ENCODE measurements at regions of chr5 and their contacts with region 1.

Region 1: GRCh38 chr5:173144200-173145176 is at the start of gene BNIP1:
- DNase-seq: peak; percentile 98
- H3K4me3 Mint-ChIP-seq: peak within 1 kb of the TSS; percentile 98
- H3K27ac Mint-ChIP-seq: peak within 1 kb of the TSS; percentile 97
- H3K4me1 Mint-ChIP-seq: no peaks in the 10 kb centered on the region
- H3K27me3 Mint-ChIP-seq: no peaks in the 10 kb centered on the region
- CTCF ChIP-seq: peak; percentile 98
- total RNA-seq, gene BNIP1: 22.1 and 35.1 TPM in 2 replicates

Region 2: DNA sequence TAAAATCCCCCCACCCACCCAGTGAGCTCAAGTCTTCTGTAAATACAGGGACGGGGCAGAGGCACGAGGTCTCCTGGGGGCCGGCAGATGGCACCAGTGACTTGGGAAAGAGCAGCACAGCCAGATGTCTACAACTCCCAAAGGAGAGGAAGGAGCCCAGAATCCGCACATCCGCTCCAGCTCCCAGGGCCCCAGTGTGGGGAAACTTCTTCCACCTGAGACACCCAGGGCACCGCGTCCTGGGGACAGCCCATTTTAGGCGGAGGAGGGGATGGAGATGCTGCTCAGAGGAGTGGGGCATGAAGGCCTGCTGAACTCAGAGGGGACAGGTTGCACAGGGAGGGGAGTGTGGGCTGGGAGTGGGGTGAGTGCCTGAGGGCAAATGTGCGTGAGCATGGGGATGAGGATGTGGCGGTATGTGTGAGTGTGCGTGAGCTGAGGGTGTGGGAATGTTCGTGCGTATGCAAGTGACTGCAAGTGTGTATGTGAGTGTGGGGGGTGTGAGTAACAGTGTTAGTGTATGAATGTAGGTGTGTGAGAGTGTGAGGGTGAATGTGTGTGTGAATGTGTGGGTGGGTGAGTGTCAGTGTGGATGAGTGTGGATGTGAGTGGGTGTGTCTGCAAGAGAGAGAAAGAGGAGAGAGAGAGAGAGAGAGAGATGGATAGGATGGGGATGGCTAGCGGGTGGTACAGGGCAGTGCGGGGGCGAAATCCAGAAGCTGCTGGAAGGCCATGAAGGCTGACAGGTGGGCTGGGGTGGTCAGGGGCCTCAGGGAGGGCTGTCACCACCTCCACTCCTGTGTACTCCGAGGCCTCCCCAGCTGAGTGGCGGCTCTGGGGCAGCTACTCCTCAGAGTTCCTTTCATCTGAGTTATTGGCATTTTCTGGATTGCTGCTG is 437.0 kb before region 1 on chr5:
- CTCF ChIA-PET with region 1: interaction called, 3 read pairs
- POLR2A ChIA-PET with region 1: no interaction called
- intact Hi-C with region 1: loop called (anchors 2 kb)
- DNase-seq: peak; percentile 89
- H3K4me3 Mint-ChIP-seq: no peak overlapping the region
- H3K27ac Mint-ChIP-seq: no peak overlapping the region
- H3K4me1 Mint-ChIP-seq: peaks cover 7% of the 10 kb centered on the region
- H3K27me3 Mint-ChIP-seq: no peaks in the 10 kb centered on the region
- CTCF ChIP-seq: peak; percentile 88

Region 3: DNA sequence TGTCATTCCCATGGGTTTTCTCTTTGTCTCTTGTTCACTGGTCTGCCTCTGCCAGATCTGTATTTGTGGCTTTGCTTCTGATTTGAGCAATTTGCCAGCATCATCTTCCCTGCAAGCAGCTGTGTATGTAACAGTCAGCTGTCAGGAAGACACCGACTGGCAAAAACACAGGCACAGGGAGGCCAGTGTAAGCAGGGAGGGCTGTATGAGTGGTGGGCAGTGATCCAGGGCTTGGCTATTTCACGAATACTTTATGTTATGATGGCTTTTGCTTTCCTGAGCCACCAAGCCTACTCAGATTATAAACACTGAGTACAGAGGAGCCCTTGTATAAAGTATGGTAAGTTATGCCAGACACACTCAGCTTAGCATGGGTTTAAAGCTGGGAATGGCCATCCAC is 11.4 kb after region 1 on chr5:
- CTCF ChIA-PET with region 1: interaction called, 23 read pairs
- POLR2A ChIA-PET with region 1: interaction called, 17 read pairs
- intact Hi-C with region 1: no loop called
- DNase-seq: no peak
- H3K4me3 Mint-ChIP-seq: no peak overlapping the region
- H3K27ac Mint-ChIP-seq: no peak overlapping the region
- H3K4me1 Mint-ChIP-seq: peaks cover 10% of the 10 kb centered on the region
- H3K27me3 Mint-ChIP-seq: no peaks in the 10 kb centered on the region
- CTCF ChIP-seq: no peak

Region 4: DNA sequence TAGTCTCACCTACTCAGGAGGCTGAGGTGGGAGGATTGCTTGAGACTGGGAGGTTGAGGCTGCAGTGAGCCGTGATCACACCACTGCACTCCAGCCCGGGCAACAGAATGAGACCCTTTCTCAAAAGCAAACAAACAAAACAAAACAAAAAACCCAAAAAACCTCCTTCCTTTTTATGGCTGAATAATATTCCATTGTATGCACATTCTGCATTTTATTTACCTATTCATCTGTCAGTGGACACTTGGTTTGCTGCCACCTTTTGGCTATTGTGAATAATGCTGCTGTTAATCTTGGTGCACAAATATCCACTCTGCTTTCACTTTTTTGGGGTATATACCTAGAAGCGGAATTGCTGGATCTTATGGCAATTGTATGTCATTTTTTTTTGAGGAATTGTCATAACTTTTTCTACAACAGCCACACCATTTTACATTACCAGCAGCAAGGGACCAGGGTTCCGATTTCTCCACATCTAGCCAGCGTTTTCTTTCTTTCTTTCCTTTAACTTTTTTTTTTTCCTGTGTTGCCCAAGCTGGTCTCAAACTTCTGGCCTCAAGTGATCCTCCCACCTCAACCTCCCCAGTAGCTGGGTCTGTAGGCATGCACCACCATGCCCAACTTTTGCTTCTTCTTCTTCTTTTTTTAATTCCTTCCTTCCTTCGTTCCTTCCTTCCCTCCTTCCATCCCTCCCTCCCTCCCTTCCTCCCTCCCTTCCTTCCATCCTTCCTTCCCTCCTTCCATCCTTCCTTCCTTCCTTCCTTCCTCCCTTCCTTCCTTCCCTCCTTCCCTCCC is 59.9 kb after region 1 on chr5:
- CTCF ChIA-PET with region 1: interaction called, 10 read pairs
- POLR2A ChIA-PET with region 1: no interaction called
- intact Hi-C with region 1: no loop called
- DNase-seq: peak; percentile 67
- H3K4me3 Mint-ChIP-seq: no peak overlapping the region
- H3K27ac Mint-ChIP-seq: no peak overlapping the region
- H3K4me1 Mint-ChIP-seq: peaks cover 26% of the 10 kb centered on the region
- H3K27me3 Mint-ChIP-seq: peaks cover 33% of the 10 kb centered on the region
- CTCF ChIP-seq: peak; percentile 66

Region 5: DNA sequence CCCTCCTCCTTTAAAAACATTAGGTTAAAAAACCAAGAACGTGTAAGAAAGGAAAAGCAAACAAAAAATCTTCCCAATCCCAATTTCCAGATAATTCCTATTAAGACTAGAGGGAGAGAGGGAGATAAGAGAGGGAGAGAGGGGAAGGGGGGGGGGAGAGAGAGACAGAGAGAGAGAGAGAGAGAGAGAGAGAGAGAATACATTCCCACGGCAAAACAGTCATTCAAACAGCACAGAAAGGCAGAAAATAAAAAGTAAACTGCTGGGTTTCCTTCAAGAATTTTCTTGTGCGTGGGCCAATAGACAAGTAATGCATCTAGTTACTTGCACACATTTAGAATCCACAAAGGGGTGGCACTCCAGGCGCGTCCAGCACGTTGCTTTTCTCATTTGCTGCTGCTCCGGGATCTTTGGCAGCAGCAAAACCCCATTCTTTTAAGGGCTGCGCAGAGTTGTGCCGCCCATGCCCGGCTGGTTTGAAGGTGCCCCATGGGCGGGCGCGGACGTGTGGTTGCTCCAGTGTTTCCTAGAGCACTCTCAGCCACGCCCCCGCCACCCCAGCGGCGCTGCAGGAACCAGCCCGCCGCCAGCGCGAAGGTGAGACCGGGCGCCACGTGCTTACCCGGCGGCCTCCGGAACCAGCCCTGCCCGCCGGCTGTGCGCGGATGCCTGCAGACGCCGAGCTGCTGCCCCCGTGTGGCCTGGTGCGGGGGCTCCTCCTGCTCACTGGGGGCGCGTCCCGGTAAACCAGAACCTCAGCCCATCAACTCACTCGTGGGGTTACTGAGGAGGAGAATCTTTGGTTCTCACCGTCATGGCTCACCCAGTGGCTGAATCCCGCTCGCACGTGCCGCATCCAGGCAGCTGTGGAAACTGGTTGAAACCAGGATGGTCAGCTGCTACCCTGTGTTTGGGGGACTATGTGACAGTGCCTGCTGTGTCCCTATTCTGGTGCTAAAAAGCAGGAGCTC is 139.1 kb after region 1 on chr5:
- CTCF ChIA-PET with region 1: interaction called, 3 read pairs
- POLR2A ChIA-PET with region 1: no interaction called
- intact Hi-C with region 1: loop called (anchors 1 kb)
- DNase-seq: peak; percentile 79
- H3K4me3 Mint-ChIP-seq: peak overlapping the region; percentile 49
- H3K27ac Mint-ChIP-seq: no peak overlapping the region
- H3K4me1 Mint-ChIP-seq: peaks cover 6% of the 10 kb centered on the region
- H3K27me3 Mint-ChIP-seq: no peaks in the 10 kb centered on the region
- CTCF ChIP-seq: peak; percentile 96